PC-3 (cell line): ENCODE measurements at regions of chr5 and their contacts with region 1.

Region 1: GRCh38 chr5:108260117-108260857 is 121.6 kb downstream of the FBXL17 start:
- DNase-seq: peak; percentile 89
- ATAC-seq: peak; percentile 99
- H3K4me3 ChIP-seq: peak overlapping the region; percentile 25; the same call in 1 of the 2 replicates
- H3K27ac ChIP-seq: no peak overlapping the region
- H3K4me1 ChIP-seq: no peaks in the 10 kb centered on the region
- H3K27me3 ChIP-seq: no peaks in the 10 kb centered on the region
- CTCF ChIP-seq: peak; percentile 99

Region 2: GRCh38 chr5:108148715-108149139 is 111.6 kb before region 1 on chr5:
- CTCF ChIA-PET with region 1: no interaction called
- POLR2A ChIA-PET with region 1: no interaction called
- intact Hi-C with region 1: loop called (anchors 2 kb)
- DNase-seq: peak; percentile 59
- ATAC-seq: peak; percentile 90
- H3K4me3 ChIP-seq: no peak overlapping the region
- H3K27ac ChIP-seq: no peak overlapping the region
- H3K4me1 ChIP-seq: no peaks in the 10 kb centered on the region
- H3K27me3 ChIP-seq: no peaks in the 10 kb centered on the region
- CTCF ChIP-seq: peak; percentile 86

Region 3: GRCh38 chr5:108295578-108296368 is 35.5 kb after region 1 on chr5:
- CTCF ChIA-PET with region 1: no interaction called
- POLR2A ChIA-PET with region 1: no interaction called
- intact Hi-C with region 1: loop called (anchors 2 kb)
- DNase-seq: peak; percentile 55
- ATAC-seq: peak; percentile 80
- H3K4me3 ChIP-seq: no peak overlapping the region
- H3K27ac ChIP-seq: peak overlapping the region; percentile 27
- H3K4me1 ChIP-seq: peaks cover 17% of the 10 kb centered on the region
- H3K27me3 ChIP-seq: no peaks in the 10 kb centered on the region
- CTCF ChIP-seq: no peak

Region 4: DNA sequence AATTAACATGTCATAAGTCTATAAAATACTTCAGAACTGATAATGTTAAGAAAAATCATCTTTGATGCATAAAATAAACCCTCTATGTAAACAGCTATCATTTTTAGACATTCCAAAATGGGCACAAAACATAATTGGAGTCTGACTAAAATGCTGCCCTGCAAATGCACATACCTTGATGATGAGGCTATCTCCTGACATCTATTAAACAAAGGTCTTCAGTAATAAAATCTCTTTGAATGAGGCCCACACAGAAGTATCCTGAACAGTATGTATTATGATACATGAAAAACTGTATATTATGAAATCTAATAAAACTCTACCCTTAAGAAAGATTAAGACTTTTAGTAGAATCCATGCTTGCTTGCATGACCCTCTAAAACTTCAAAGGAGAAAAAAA is 55.5 kb after region 1 on chr5:
- CTCF ChIA-PET with region 1: no interaction called
- POLR2A ChIA-PET with region 1: no interaction called
- intact Hi-C with region 1: loop called (anchors 2 kb)
- DNase-seq: peak; percentile 73
- ATAC-seq: peak; percentile 100
- H3K4me3 ChIP-seq: no peak overlapping the region
- H3K27ac ChIP-seq: peak overlapping the region; percentile 23; the same call in 1 of the 2 replicates
- H3K4me1 ChIP-seq: peaks cover 12% of the 10 kb centered on the region
- H3K27me3 ChIP-seq: no peaks in the 10 kb centered on the region
- CTCF ChIP-seq: no peak

Region 5: DNA sequence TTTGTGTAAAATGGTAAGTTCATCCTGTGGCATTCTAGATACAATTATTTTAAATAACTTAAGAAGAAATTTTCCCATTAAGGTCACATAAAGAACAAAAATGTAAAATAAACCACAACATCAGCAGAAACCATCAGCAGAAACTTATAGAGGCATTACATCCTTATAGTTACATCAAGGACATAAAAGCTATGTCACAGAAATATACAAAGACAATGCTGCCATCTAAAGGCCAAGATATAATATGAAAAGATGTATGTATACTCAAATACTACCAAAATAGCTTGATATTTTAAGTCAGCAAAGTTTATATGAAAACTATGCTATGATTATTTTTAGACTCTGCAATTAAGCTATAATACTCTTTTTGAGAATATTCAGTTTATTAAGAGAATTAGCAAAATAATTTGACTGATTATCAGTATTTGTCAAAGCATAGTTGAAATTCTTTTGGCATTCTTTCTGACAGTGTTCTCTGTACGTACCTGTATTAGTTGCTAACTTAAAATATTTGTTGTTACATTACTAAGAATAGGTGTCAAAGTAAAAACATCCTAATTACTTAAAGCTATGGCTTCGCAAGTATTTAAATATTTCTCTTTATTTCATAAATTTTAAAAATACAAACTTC is 85.4 kb after region 1 on chr5:
- CTCF ChIA-PET with region 1: interaction called, 31 read pairs
- POLR2A ChIA-PET with region 1: no interaction called
- intact Hi-C with region 1: loop called (anchors 1 kb)
- DNase-seq: peak; percentile 77
- ATAC-seq: peak; percentile 88
- H3K4me3 ChIP-seq: no peak overlapping the region
- H3K27ac ChIP-seq: no peak overlapping the region
- H3K4me1 ChIP-seq: no peaks in the 10 kb centered on the region
- H3K27me3 ChIP-seq: no peaks in the 10 kb centered on the region
- CTCF ChIP-seq: peak; percentile 87